ENCODE measurements at regions of chr14 and their contacts with region 1.

Region 1: DNA sequence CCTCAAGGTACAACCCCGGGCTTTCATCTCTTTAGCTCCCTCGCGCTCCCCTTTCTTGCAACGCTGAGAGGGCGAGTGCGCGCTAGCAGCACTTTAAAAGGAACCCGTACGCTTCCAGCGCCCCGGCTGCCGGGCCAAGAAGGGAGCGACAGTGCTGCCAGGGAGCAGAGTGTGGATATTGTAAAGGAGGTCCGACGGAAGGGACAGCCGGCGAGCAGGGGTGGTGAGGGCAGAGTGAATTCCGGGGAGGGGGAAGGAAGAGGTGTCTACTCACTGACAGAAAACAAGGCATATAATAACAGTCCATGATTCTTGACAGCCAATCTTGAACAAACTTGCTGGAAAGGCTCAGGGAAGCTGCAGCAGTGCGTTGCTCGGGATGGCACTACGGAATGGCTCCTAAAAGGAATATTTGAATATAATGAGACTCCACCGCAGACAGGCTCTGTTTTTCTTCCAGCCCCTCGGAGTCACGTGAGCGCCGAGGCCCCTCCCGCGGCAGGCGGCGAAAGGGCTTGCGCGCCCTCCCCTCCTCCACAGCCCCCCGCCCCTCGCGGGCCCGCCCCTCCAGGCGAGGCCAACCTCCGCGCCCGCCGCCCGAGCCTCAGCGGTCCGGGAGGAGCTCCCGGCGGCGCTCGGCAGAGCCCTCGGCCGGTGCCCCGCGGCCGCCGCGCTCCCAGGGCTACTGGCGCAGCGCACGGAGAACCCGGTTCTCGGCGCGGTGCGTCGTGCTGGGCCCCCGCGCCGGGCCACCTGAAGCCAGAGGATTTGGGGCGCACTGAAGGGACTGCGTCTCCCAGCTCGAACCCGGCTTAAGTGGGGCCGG is 3.4 kb downstream of the BMP4 start:
- DNase-seq: peak; percentile 87 to 88
- ATAC-seq: peak; percentile 85 to 94 (median 88)
- H3K4me3 ChIP-seq: peak overlapping the region; percentile 52 to 83 (median 74)
- H3K27ac ChIP-seq: peak overlapping the region; percentile 86 to 98 (median 91)
- H3K4me1 ChIP-seq: peaks cover 0 to 49% (median 27%) of the 10 kb centered on the region in 9 donors
- H3K27me3 ChIP-seq: peaks cover 0 to 64% (median 7%) of the 10 kb centered on the region in 7 donors
- CTCF ChIP-seq: no peak

Region 2: GRCh38 chr14:53715193-53715721 is 238.0 kb before region 1 on chr14:
- intact Hi-C with region 1: loop called in 2 of 10 experiments (anchors 10 kb)
- DNase-seq: no peak
- ATAC-seq: peak in 7 of 8 donors; percentile 66 to 89 (median 83)
- H3K4me3 ChIP-seq: peak overlapping the region in 7 of 10 donors; percentile 5 to 34 (median 15)
- H3K27ac ChIP-seq: peak overlapping the region; percentile 2 to 73 (median 54)
- H3K4me1 ChIP-seq: peaks cover 0 to 35% (median 25%) of the 10 kb centered on the region in 9 donors
- H3K27me3 ChIP-seq: no peaks in the 10 kb centered on the region
- CTCF ChIP-seq: no peak

Region 3: GRCh38 chr14:53814392-53814791 is 138.8 kb before region 1 on chr14:
- intact Hi-C with region 1: loop called in 3 of 10 experiments (anchors 10 kb)
- DNase-seq: no peak
- ATAC-seq: peak in 3 of 8 donors; percentile 8 to 51 (median 17)
- H3K4me3 ChIP-seq: no peak overlapping the region
- H3K27ac ChIP-seq: no peak overlapping the region
- H3K4me1 ChIP-seq: peaks cover 0 to 15% (median 0%) of the 10 kb centered on the region in 9 donors
- H3K27me3 ChIP-seq: no peaks in the 10 kb centered on the region
- CTCF ChIP-seq: no peak

Region 4: DNA sequence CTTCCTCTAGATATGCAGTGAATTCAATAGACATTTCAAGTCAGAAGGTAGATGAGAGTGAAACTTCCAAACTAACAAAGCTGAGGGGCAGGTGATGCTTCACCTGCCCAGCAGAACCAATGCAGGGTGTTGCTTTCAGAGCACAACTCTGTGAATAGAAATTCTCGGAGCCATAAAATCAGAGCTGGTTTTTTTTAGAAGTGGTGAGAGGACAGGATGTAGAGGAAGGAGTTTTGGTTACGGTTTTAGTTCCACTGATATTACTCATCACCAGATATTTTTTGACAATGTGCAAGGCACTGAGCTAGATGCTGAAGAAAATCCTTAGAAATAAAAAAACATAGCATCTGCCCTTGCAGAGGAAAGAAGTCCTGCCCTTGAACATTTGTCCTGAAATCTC is 58.8 kb before region 1 on chr14:
- intact Hi-C with region 1: loop called in 2 of 10 experiments (anchors 5 kb)
- DNase-seq: no peak
- ATAC-seq: peak in 1 of 8 donors; percentile 29
- H3K4me3 ChIP-seq: no peak overlapping the region
- H3K27ac ChIP-seq: no peak overlapping the region
- H3K4me1 ChIP-seq: peaks cover 0 to 43% (median 15%) of the 10 kb centered on the region in 9 donors
- H3K27me3 ChIP-seq: no peaks in the 10 kb centered on the region
- CTCF ChIP-seq: no peak

Region 5: GRCh38 chr14:54026671-54027070 is 73.5 kb after region 1 on chr14:
- intact Hi-C with region 1: no loop called
- DNase-seq: no peak
- ATAC-seq: no peak
- H3K4me3 ChIP-seq: no peak overlapping the region
- H3K27ac ChIP-seq: no peak overlapping the region
- H3K4me1 ChIP-seq: no peaks in the 10 kb centered on the region
- H3K27me3 ChIP-seq: no peaks in the 10 kb centered on the region
- CTCF ChIP-seq: no peak

Region 6: DNA sequence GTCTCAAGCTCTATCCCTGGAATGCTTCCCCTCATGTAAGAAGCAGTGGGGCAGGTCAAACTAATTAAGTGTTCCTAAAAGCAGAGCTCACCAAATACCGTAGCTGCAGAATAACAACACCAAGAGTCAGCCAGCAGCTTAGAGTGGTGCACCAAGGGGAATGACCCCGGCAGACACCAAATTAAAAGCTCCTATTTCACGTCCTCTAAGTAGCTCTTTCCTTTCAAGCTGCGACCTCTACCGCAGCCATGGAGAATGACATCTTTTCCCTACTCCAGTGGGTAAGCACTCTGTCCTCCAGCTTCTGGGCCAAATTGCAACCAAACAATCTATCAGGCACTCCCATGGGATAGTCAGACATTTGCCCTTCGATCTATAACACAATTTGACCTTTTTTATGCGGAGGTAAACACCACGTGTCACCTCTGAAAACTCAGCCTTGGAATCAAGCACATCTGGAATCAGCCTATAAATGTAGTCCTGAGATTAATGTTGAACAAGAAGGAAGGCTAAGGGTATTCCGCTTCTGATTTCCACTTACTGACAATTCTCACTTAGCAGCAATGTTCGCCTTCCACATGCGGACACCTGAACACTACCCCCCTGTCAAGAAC is 376.0 kb after region 1 on chr14:
- intact Hi-C with region 1: loop called in 3 of 10 experiments (anchors 5 to 10 kb)
- DNase-seq: peak in 1 of 2 donors; percentile 47
- ATAC-seq: peak; percentile 64 to 91 (median 82)
- H3K4me3 ChIP-seq: no peak overlapping the region
- H3K27ac ChIP-seq: peak overlapping the region in 2 of 10 donors; percentile 22 to 27
- H3K4me1 ChIP-seq: peaks cover 0 to 13% (median 5%) of the 10 kb centered on the region in 9 donors
- H3K27me3 ChIP-seq: no peaks in the 10 kb centered on the region
- CTCF ChIP-seq: peak in 8 of 9 donors; percentile 45 to 81 (median 75)